Activated B cell treated with CpG ODN at 0.5 μM for 24 hours (primary cell): ENCODE measurements at regions of chr3 and their contacts with region 1.

Region 1: GRCh38 chr3:162998205-162998604 is 1501.6 kb downstream of the OTOL1 start:
- DNase-seq: no peak
- ATAC-seq: no peak
- H3K4me3 Mint-ChIP-seq: no peak overlapping the region
- H3K27ac Mint-ChIP-seq: no peak overlapping the region
- H3K4me1 Mint-ChIP-seq: no peaks in the 10 kb centered on the region
- H3K27me3 Mint-ChIP-seq: no peaks in the 10 kb centered on the region
- CTCF ChIP-seq: no peak

Region 2: DNA sequence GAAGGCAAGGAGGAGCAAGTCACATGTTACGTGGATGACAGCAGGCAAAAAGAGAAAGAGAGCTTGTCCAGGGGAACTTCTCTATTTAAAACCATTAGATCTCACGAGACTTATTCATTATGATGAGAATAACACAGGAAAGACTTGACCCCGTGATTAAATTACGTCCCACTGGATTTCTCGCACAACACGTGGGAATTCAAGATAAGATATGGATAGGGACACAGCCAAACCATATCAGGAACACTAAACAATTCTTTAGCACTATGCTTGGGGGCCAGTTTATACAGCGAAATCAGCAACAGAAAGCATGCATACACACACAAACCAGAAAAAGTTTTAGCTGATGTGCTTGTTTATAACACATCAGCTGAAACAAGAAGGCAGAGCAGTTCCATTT is 797.4 kb before region 1 on chr3:
- CTCF ChIA-PET with region 1: no interaction called
- POLR2A ChIA-PET with region 1: no interaction called
- intact Hi-C with region 1: no loop called
- DNase-seq: no peak
- ATAC-seq: no peak
- H3K4me3 Mint-ChIP-seq: no peak overlapping the region
- H3K27ac Mint-ChIP-seq: no peak overlapping the region
- H3K4me1 Mint-ChIP-seq: no peaks in the 10 kb centered on the region
- H3K27me3 Mint-ChIP-seq: no peaks in the 10 kb centered on the region
- CTCF ChIP-seq: no peak

Region 3: DNA sequence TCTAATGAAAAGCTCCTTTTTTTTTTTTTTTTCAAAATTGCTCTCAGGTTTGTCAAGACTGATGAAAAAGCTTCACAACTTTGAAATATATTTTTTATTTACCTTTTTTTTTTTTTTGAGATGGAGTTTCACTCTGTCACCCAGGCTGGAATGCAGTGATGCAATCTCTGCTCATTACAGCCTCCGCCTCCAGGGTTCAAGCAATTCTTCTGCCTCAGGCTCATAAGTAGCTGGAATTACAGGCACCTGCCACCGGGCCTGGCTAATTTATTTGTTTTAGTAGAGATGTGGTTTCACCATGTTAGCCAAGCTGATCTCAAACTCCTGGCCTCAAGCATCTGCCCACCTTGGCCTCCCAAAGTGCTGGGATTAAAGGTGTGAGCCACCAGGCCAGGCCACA is 13.4 kb after region 1 on chr3:
- CTCF ChIA-PET with region 1: no interaction called
- POLR2A ChIA-PET with region 1: no interaction called
- intact Hi-C with region 1: loop called (anchors 1 kb)
- DNase-seq: no peak
- ATAC-seq: no peak
- H3K4me3 Mint-ChIP-seq: no peak overlapping the region
- H3K27ac Mint-ChIP-seq: no peak overlapping the region
- H3K4me1 Mint-ChIP-seq: no peaks in the 10 kb centered on the region
- H3K27me3 Mint-ChIP-seq: no peaks in the 10 kb centered on the region
- CTCF ChIP-seq: no peak

Region 4: DNA sequence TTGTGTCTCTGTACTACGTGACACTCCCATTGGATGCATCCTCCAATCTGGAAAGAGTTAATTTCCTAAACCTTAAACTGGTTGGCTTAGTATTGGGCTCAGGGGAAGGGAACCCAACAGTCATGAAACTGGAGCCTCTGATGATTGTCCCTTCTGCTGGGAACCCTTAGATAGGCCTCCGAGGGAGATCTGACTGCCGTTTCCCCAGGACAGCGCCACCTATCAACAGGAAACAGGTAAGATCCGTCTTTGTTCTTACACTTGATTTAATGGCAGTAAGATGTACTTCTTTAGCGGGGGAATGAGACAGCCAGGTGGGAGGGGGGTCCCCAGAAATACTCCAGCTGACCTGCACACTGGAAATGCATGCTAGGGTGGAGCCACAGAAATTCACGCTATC is 330.5 kb after region 1 on chr3:
- CTCF ChIA-PET with region 1: no interaction called
- POLR2A ChIA-PET with region 1: no interaction called
- intact Hi-C with region 1: no loop called
- DNase-seq: no peak
- ATAC-seq: no peak
- H3K4me3 Mint-ChIP-seq: no peak overlapping the region
- H3K27ac Mint-ChIP-seq: no peak overlapping the region
- H3K4me1 Mint-ChIP-seq: no peaks in the 10 kb centered on the region
- H3K27me3 Mint-ChIP-seq: no peaks in the 10 kb centered on the region
- CTCF ChIP-seq: no peak